ENCODE measurements at regions of chr1 and their contacts with region 1.

Region 1: DNA sequence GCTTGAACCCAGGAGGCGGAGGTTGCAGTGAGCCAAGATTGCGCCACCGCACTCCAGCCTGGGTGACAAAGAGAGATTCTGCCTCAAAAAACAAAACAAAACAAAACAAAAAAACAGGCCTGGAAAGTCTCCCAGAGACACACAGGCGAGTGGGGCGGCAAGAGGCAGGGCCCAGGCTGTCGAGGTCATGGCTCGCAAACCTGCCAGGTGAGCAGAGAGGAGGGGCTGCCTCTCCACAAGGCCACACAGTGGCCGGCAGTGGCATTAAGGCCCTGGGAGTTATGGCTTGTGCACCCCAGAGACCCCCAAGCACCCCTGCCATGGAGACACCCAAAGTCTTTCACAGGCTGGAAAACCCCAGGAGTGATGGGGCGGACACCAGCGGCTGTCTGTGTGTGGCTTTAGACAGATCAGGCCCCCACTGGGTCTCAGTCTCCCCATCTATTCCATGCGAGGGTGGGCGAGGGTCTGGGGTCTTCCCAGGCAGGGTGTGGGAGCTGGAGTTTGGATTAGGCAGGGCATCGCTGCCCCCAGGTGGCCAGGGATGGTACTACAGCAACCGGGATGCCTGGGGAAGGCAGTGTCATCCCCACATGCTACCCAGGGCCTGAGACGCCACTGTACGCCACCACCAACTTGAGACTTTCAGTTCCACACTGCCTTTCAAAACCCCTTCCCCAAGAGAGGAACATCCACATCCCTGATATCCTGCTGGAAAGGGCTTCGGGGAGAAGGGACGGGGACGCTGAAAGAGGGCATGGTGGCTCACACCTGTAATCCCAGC is 7.3 kb upstream of the CTRC start:
- DNase-seq: no peak
- H3K4me3 ChIP-seq: no peak overlapping the region
- H3K27ac ChIP-seq: peak overlapping the region; percentile 21
- H3K27me3 ChIP-seq: no peaks in the 10 kb centered on the region
- CTCF ChIP-seq: peak; percentile 94

Region 2: GRCh38 chr1:15304701-15305467 is 126.1 kb before region 1 on chr1:
- CTCF ChIA-PET with region 1: interaction called, 10 read pairs
- POLR2A ChIA-PET with region 1: no interaction called
- DNase-seq: no peak
- H3K4me3 ChIP-seq: no peak overlapping the region
- H3K27ac ChIP-seq: no peak overlapping the region
- H3K27me3 ChIP-seq: peaks cover 3% of the 10 kb centered on the region
- CTCF ChIP-seq: peak; percentile 74

Region 3: DNA sequence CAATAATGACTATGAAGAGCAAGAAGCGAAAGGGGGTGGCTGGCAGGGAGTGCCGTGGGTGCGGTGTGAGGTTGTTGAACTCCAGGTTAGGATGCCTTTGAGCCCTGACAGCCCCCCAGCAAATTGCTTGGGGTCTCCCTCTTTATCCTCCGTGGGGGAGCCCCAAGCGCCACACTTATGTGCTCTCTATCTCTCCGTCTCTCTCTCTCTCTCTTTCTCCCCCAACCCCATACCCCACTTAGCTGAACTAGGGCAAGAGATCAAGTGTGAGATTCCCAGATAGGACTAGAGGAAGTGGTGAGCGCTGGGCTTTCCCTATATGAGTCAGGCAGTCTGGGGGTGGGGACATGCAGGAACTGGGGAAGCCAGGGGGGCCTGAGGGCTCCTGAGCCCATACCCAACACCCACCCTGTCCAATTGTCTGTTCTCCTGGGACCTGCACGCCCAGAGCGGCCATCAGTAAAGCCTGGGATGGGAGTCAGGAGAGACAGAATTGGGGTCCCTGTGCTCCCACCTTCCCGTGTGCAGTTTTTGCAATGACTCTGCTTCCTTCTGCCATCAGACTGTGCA is 13.5 kb before region 1 on chr1:
- CTCF ChIA-PET with region 1: interaction called, 30 read pairs
- POLR2A ChIA-PET with region 1: interaction called, 5 read pairs
- DNase-seq: no peak
- H3K4me3 ChIP-seq: no peak overlapping the region
- H3K27ac ChIP-seq: peak overlapping the region; percentile 61
- H3K27me3 ChIP-seq: no peaks in the 10 kb centered on the region
- CTCF ChIP-seq: no peak

Region 4: GRCh38 chr1:15452216-15452615 is 21.2 kb after region 1 on chr1:
- CTCF ChIA-PET with region 1: interaction called, 11 read pairs
- POLR2A ChIA-PET with region 1: no interaction called
- DNase-seq: no peak
- H3K4me3 ChIP-seq: no peak overlapping the region
- H3K27ac ChIP-seq: no peak overlapping the region
- H3K27me3 ChIP-seq: peaks cover 9% of the 10 kb centered on the region
- CTCF ChIP-seq: no peak

Region 5: DNA sequence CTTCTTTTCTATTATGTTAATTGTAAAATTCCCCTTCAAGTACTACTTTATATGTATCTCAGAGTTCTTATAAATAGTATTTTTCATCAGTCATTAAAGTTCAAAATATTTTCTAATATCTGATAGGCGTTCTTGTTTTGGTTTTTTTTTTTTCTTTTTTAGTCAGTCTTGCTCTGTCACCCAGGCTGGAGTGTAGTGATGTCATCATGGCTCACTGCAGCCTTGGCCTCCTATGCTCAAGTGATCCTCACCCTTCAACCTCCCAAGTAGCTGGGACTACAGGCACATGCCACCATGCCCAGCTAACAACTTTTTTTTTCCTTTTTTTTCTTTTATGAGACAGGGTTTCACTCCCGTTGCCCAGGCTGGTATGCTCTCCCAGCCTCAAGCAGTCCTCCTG is 126.6 kb after region 1 on chr1:
- CTCF ChIA-PET with region 1: no interaction called
- POLR2A ChIA-PET with region 1: no interaction called
- DNase-seq: no peak
- H3K4me3 ChIP-seq: no peak overlapping the region
- H3K27ac ChIP-seq: no peak overlapping the region
- H3K27me3 ChIP-seq: no peaks in the 10 kb centered on the region
- CTCF ChIP-seq: no peak